ENCODE measurements at regions of chr1 and their contacts with region 1.

Region 1: DNA sequence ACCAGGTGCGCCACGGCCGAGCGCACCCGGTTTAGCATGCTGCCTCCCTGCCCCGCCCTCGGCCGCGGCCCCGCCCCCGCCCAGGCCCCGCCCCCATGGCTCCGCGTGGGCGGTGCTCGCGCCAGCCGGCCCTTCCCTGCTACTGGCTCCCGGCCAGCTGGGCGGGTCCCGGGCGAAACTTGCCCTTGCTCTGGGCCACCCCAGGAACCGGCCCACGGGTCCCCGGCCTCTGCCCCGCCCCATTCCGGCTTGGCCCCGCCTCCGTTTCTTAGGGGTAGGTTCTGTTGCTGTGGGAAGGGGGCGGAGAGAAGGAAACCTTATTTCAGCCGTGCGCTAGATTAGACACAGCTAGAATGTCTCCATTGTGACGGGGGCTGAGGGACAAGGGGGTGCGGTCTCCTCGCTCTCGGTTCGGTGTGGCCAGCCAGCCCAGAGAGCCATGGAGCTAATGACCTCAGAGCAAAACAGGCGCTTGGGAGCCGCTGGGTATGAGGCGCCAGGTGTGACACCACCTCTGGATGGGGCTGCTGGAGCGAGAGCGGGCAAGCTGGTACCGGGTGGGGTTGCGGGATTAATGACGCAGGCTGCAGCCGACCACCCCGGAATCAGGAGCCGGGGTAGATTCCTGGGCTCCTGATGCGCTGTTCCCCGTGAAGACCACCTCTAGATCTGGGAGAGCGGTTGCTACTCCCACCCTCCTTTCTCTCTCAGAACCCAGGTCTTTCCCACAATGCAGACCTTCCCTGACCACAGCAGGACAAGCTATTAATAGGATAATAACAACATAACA is at the start of gene PPM1J:
- DNase-seq: peak; percentile 96 to 99 (median 98)
- H3K4me3 ChIP-seq: peak within 1 kb of the TSS; percentile 72
- H3K27ac ChIP-seq: peak within 1 kb of the TSS; percentile 51 to 55
- H3K4me1 ChIP-seq: peaks cover 4% of the 10 kb centered on the region
- H3K27me3 ChIP-seq: no peaks in the 10 kb centered on the region
- CTCF ChIP-seq: peak in 1 of 3 donors; percentile 9
- EP300 ChIP-seq: no peak
- POLR2A ChIP-seq: no peak
- total RNA-seq, gene PPM1J: 1.4 to 6.3 (median 2.9) TPM

Region 2: GRCh38 chr1:112762541-112763517 is 47.4 kb after region 1 on chr1:
- intact Hi-C with region 1: no loop called
- DNase-seq: no peak
- H3K4me3 ChIP-seq: no peak overlapping the region
- H3K27ac ChIP-seq: no peak overlapping the region
- H3K4me1 ChIP-seq: no peaks in the 10 kb centered on the region
- H3K27me3 ChIP-seq: no peaks in the 10 kb centered on the region
- CTCF ChIP-seq: no peak
- EP300 ChIP-seq: no peak
- POLR2A ChIP-seq: no peak

Region 3: DNA sequence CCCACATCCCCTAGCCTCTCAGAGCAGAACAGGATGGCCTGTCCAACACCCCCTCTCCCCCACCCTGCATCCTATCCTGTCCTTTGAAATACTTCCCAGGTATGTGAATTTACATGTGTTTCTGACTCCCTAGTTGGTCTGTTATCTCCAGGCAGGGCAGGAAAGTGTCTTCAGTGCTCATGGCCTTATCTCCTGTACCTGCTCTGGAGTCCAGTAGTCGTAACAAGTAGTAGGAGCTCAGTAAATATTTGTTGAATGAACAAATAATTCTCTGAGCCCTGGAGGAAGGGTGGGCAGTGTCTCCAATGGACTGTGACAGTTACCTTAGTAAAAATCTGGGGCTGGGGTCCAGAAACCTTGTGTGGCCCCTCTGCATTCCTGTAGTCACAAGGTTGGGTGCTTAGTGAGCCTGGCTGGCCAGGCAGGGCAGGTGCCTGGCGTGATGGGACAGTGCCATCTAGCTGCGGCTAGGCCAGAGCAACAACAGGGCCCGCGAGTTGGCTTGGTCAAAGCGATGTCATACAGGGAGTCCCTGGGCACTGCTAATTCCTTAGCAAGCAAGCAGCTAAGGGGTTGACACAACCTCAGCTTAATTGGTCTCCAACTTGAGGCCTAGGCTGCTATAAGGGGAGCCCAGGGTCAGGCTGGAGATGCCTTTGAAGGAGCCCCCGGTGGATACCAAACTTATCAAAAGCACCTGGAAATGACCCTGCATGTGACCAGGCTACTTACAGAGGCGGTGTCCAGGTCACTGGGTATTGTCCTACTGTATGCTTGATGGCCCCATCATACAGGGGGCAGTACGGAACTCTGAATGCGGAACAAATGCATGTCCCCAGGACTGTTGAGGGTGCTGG is 88.7 kb after region 1 on chr1:
- intact Hi-C with region 1: loop called in 2 of 4 experiments (anchors 2 to 5 kb)
- DNase-seq: peak; percentile 42 to 81 (median 55)
- H3K4me3 ChIP-seq: no peak overlapping the region
- H3K27ac ChIP-seq: no peak overlapping the region
- H3K4me1 ChIP-seq: peaks cover 1% of the 10 kb centered on the region
- H3K27me3 ChIP-seq: no peaks in the 10 kb centered on the region
- CTCF ChIP-seq: peak in 1 of 3 donors; percentile 61
- EP300 ChIP-seq: no peak
- POLR2A ChIP-seq: no peak

Region 4: GRCh38 chr1:112955781-112956543 is 240.5 kb after region 1 on chr1 and contains the start of gene SLC16A1:
- intact Hi-C with region 1: loop called in 2 of 4 experiments (anchors 10 kb)
- DNase-seq: peak; percentile 91 to 94 (median 93)
- H3K4me3 ChIP-seq: peak within 1 kb of the TSS; percentile 84
- H3K27ac ChIP-seq: peak within 1 kb of the TSS; percentile 58 to 84
- H3K4me1 ChIP-seq: peaks cover 1% of the 10 kb centered on the region
- H3K27me3 ChIP-seq: no peaks in the 10 kb centered on the region
- CTCF ChIP-seq: peak in 2 of 3 donors; percentile 27 to 35
- EP300 ChIP-seq: no peak
- POLR2A ChIP-seq: peak; percentile 80
- total RNA-seq, gene SLC16A1: 11.9 to 38.8 (median 23.3) TPM

Region 5: DNA sequence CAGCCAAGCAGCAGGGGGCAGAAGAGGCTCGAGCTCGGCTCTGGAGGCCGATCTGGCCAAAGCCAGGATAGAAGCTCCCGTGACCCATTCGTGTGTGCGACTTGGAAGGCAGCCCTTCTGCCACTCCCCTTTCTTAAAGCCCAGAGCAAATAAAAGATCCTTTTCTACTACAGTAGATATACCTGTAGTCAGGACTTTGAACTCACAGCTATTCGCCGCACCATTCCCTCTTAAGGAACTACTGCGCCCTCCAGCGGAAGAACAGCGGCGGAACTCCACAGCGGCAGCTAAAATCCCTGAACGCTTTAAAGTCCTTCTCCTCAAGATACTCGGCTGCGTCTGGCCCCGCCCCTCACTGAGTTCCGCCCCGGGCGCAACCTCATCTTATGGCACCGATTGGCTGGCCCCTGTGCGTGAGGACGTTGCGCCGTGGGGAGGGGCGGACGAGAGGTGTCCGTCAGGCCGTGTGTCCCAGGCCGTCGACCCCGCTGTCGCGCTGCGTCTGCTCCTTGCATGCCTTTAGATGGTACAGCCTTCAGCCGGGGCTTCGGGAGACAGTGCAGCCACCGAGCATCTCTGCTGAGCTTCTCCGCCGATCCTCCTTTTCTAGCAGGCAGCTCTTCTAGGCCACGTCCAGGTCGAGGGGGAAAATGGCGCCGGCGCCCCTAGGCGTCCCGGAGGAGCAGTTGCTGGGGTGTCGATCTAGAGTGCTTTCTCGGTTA is 357.5 kb after region 1 on chr1 and contains the start of gene LRIG2:
- intact Hi-C with region 1: loop called in 1 of 4 experiments (anchors 10 kb)
- DNase-seq: peak; percentile 97 to 98 (median 97)
- H3K4me3 ChIP-seq: peak within 1 kb of the TSS; percentile 81
- H3K27ac ChIP-seq: peak within 1 kb of the TSS; percentile 70 to 83
- H3K4me1 ChIP-seq: peaks cover 2% of the 10 kb centered on the region
- H3K27me3 ChIP-seq: no peaks in the 10 kb centered on the region
- CTCF ChIP-seq: peak; percentile 86 to 89 (median 88)
- EP300 ChIP-seq: no peak
- POLR2A ChIP-seq: peak; percentile 73
- total RNA-seq, gene LRIG2: 13.3 to 32.4 (median 20.1) TPM

Measured in ovary (tissue), 10 donors.